ENCODE measurements at regions of chr12 and their contacts with region 1.

Region 1: GRCh38 chr12:569803-570434 is 93.3 kb downstream of the NINJ2 start:
- DNase-seq: peak; percentile 86 to 94 (median 90)
- ATAC-seq: peak; percentile 57 to 77 (median 69)
- H3K4me3 ChIP-seq: peak overlapping the region; percentile 44 to 74 (median 65)
- H3K27ac ChIP-seq: peak overlapping the region; percentile 91 to 99 (median 95)
- H3K4me1 ChIP-seq: peaks cover 5 to 41% (median 34%) of the 10 kb centered on the region in 12 donors
- H3K27me3 ChIP-seq: no peaks in the 10 kb centered on the region
- CTCF ChIP-seq: peak; percentile 90 to 98 (median 96)
- POLR2A ChIP-seq: no peak

Region 2: DNA sequence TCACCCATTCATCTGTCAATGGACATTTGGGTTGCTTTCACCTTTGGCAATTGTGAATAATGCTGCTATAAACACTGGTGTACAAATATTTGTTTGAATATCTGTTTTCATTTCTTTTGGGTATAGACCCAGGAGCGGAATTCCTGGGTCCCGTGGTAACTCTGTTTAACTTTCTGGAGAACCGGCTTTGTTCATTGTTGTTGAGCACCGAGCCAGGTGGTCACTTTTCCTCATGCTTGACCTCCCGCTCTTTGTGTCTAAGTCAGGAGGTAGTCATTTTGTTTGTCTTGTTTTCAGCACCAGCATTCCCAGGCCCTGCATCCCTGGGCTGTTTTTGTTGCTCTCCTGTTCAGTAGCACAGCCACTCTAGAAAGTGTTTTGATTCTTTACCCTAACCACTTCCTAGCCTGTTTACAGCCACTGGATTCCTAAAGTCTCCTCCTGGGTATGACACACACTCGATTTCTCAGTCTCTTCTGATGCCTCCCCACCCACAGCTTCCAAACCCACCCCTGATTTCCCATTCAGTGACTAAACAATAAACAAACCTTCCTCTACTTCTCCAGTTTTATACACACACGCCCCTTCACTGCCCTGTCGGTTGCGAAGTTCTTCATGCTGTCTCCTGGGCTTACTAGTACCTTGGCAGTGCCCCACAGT is 72.3 kb before region 1 on chr12:
- intact Hi-C with region 1: no loop called
- DNase-seq: no peak
- ATAC-seq: no peak
- H3K4me3 ChIP-seq: no peak overlapping the region
- H3K27ac ChIP-seq: no peak overlapping the region
- H3K4me1 ChIP-seq: peaks cover 0 to 19% (median 7%) of the 10 kb centered on the region in 12 donors
- H3K27me3 ChIP-seq: no peaks in the 10 kb centered on the region
- CTCF ChIP-seq: no peak
- POLR2A ChIP-seq: no peak

Region 3: DNA sequence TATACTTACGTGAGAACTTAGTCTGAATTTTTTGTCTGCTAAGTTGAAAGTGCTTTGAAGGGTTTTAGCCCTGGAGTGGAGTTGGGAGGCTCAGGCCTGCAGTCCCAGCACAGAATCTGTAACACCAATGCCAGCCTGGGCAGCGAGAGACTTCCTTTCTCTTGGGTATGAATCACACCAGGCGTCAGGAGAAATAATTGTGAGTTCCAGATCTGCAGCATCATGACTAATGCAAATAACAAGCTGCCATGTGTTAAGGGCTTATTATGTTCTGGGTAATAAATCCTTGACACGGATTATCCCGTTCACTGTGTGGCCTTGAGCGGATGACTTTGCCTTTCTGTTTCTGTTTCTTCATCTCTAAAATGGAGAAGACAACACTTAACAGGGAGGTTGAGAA is 39.6 kb before region 1 on chr12:
- intact Hi-C with region 1: no loop called
- DNase-seq: no peak
- ATAC-seq: no peak
- H3K4me3 ChIP-seq: no peak overlapping the region
- H3K27ac ChIP-seq: no peak overlapping the region
- H3K4me1 ChIP-seq: peaks cover 0 to 8% (median 0%) of the 10 kb centered on the region in 12 donors
- H3K27me3 ChIP-seq: no peaks in the 10 kb centered on the region
- CTCF ChIP-seq: no peak
- POLR2A ChIP-seq: no peak

Region 4: GRCh38 chr12:810671-811415 is 240.9 kb after region 1 on chr12:
- intact Hi-C with region 1: loop called in 9 of 10 experiments (anchors 2 to 5 kb)
- DNase-seq: no peak
- ATAC-seq: peak in 2 of 4 donors; percentile 11 to 21
- H3K4me3 ChIP-seq: no peak overlapping the region
- H3K27ac ChIP-seq: peak overlapping the region in 1 of 12 donors; percentile 13
- H3K4me1 ChIP-seq: peaks cover 9 to 71% (median 44%) of the 10 kb centered on the region in 12 donors
- H3K27me3 ChIP-seq: no peaks in the 10 kb centered on the region
- CTCF ChIP-seq: no peak
- POLR2A ChIP-seq: no peak

Region 5: DNA sequence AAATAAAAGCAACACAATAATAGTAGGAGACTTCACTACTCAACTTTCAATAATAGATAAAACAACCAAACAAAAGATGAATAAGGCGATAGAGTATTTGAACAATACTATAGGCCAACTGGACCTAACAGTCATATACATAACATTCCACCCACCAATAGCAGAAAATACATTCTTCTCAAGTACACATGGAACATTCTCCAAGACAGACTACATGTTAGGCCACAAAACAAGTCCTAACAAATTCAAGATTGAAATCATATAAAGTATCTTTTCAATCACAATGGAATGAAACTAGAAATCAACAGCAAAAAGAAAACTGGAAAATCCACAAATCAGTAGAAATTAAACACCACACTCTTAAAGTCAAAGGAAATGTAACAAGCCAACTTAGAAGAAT is 350.8 kb after region 1 on chr12:
- intact Hi-C with region 1: loop called in 1 of 10 experiments (anchors 10 kb)
- DNase-seq: no peak
- ATAC-seq: no peak
- H3K4me3 ChIP-seq: no peak overlapping the region
- H3K27ac ChIP-seq: no peak overlapping the region
- H3K4me1 ChIP-seq: peaks cover 0 to 4% (median 0%) of the 10 kb centered on the region in 12 donors
- H3K27me3 ChIP-seq: no peaks in the 10 kb centered on the region
- CTCF ChIP-seq: no peak
- POLR2A ChIP-seq: no peak

Region 6: GRCh38 chr12:949453-950191 is 379.7 kb after region 1 on chr12 and contains the start of gene RAD52:
- intact Hi-C with region 1: loop called in 9 of 10 experiments (anchors 1 to 5 kb)
- DNase-seq: peak; percentile 98 to 99 (median 98)
- ATAC-seq: peak; percentile 97 to 98 (median 97)
- H3K4me3 ChIP-seq: peak within 1 kb of the TSS; percentile 68 to 94 (median 82)
- H3K27ac ChIP-seq: peak within 1 kb of the TSS; percentile 76 to 98 (median 92)
- H3K4me1 ChIP-seq: peaks cover 0 to 22% (median 12%) of the 10 kb centered on the region in 12 donors
- H3K27me3 ChIP-seq: no peaks in the 10 kb centered on the region
- CTCF ChIP-seq: peak; percentile 95 to 100 (median 99)
- POLR2A ChIP-seq: peak in 1 of 2 donors; percentile 48
- total RNA-seq, gene RAD52: 4.1 to 9.7 (median 6.2) TPM

Region 7: GRCh38 chr12:1099158-1099557 is 529.2 kb after region 1 on chr12:
- intact Hi-C with region 1: loop called in 8 of 10 experiments (anchors 5 to 10 kb)
- DNase-seq: no peak
- ATAC-seq: no peak
- H3K4me3 ChIP-seq: no peak overlapping the region
- H3K27ac ChIP-seq: no peak overlapping the region
- H3K4me1 ChIP-seq: peaks cover 0 to 14% (median 0%) of the 10 kb centered on the region in 12 donors
- H3K27me3 ChIP-seq: no peaks in the 10 kb centered on the region
- CTCF ChIP-seq: no peak
- POLR2A ChIP-seq: no peak